A549 (cell line): ENCODE measurements at regions of chr3 and their contacts with region 1.

Region 1: DNA sequence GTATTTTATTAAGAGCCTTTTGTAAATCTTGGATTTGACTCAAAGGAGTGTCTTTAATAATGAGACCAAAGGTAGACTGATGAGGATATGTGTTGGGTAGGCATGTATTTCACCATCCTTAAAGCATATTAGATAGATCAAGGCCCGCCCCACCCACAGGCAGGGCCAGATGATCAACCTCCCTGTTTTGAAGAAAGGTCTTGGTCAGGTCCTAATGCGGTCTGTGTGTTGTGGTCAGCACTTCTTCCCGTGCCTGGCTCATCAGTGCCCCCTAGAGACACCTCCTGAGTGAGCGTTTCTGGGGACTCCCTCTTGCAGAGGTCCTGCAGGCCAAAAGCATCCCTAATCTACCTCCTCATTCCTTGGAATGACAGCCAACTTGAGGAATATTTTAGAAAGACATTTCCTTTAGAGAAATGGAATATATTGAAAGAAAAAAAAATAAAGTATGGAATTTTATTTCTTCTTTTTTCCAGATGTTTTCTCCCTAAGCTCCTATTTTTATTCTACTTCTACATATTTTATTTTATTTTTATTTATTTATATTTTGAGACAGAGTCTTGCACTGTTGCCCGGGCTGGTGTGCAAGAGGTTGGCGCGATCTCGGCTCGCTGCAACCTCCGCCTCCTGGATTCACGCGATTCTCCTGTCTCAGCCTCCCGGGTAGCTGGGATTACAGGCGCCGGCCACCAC is 6.0 kb downstream of the TM4SF4 start:
- DNase-seq: peak; percentile 85 to 95
- ATAC-seq: peak; percentile 97 to 98
- H3K4me3 ChIP-seq: no peak overlapping the region
- H3K27ac ChIP-seq: peak overlapping the region; percentile 82 to 83
- H3K4me1 ChIP-seq: peaks cover 46% of the 10 kb centered on the region
- CTCF ChIP-seq: peak; percentile 94
- EP300 ChIP-seq: no peak
- POLR2A ChIP-seq: no peak
- RAD21 ChIP-seq: peak; percentile 99 to 100

Region 2: DNA sequence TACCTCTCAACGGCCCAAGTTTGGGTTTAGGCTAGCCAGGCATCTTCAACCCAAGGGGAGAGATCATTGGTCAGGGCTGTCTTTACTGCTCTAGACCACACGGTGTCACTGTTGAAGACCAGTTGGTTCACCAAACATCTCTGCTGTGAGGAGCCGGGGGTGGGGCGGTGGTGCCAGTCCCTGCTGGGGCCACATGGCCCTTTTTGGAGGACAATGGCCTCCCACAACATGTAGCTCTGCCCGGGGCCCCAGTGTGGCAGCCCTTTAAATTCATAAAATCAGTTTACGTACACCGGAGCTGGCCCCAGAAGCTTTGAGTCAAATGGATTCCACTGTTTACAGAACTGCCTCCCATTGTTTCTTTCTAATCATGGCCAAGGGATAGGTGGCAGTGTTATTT is 127.9 kb before region 1 on chr3:
- CTCF ChIA-PET with region 1: interaction called, 44 read pairs
- POLR2A ChIA-PET with region 1: no interaction called
- DNase-seq: peak; percentile 82 to 86
- ATAC-seq: peak; percentile 83 to 95; a peak in 5 of 6 replicates
- H3K4me3 ChIP-seq: no peak overlapping the region
- H3K27ac ChIP-seq: peak overlapping the region; percentile 35 to 72; a peak in 5 of 6 replicates
- H3K4me1 ChIP-seq: peaks cover 6% of the 10 kb centered on the region; the same call in 1 of the 3 replicates
- CTCF ChIP-seq: peak; percentile 59
- EP300 ChIP-seq: no peak
- POLR2A ChIP-seq: no peak
- RAD21 ChIP-seq: peak; percentile 73 to 82

Region 3: DNA sequence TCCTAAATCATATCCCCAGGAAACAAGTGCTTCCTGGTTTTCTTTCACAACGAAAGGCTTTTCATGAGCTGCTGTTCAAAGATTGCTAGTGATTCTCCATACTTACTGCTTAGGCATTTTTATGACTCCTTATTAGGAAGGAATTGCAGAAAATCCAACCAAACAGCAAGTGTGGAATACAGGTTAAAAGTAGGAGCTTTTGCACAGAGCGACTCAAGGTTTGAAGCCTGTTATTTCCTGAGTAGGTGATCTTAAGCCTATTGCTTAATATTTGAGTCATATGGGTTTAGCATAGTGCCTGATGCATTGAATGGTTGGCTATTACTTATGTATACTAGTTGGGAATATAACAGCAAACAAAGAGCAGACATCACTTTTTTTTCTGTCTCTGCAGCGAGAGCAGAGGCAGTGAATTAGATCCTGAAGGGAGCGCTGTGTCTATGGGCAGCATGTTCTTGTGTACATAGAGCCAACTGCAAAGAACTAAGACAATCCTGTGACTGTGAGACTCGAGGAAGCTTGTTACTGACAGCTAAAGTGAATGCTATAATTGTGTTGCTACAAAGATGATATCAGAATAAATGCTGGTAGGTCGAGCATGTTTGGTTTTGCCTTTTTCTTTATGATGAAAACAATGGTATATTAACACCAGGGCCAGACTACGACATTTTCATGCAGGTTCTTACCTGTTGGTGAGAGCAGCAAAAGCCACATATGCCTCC is 109.3 kb before region 1 on chr3:
- CTCF ChIA-PET with region 1: interaction called, 12 read pairs
- POLR2A ChIA-PET with region 1: no interaction called
- DNase-seq: peak in 1 of 2 experiments; percentile 74
- ATAC-seq: peak in 1 of 2 experiments; percentile 0; a peak in 1 of 6 replicates
- H3K4me3 ChIP-seq: peak overlapping the region; percentile 58
- H3K27ac ChIP-seq: peak overlapping the region; percentile 79 to 88
- H3K4me1 ChIP-seq: peaks cover 86% of the 10 kb centered on the region
- CTCF ChIP-seq: peak; percentile 41; the same call in 2 of the 3 replicates
- EP300 ChIP-seq: no peak
- POLR2A ChIP-seq: no peak
- RAD21 ChIP-seq: peak; percentile 39 to 43; a peak in 4 of 5 replicates

Region 4: DNA sequence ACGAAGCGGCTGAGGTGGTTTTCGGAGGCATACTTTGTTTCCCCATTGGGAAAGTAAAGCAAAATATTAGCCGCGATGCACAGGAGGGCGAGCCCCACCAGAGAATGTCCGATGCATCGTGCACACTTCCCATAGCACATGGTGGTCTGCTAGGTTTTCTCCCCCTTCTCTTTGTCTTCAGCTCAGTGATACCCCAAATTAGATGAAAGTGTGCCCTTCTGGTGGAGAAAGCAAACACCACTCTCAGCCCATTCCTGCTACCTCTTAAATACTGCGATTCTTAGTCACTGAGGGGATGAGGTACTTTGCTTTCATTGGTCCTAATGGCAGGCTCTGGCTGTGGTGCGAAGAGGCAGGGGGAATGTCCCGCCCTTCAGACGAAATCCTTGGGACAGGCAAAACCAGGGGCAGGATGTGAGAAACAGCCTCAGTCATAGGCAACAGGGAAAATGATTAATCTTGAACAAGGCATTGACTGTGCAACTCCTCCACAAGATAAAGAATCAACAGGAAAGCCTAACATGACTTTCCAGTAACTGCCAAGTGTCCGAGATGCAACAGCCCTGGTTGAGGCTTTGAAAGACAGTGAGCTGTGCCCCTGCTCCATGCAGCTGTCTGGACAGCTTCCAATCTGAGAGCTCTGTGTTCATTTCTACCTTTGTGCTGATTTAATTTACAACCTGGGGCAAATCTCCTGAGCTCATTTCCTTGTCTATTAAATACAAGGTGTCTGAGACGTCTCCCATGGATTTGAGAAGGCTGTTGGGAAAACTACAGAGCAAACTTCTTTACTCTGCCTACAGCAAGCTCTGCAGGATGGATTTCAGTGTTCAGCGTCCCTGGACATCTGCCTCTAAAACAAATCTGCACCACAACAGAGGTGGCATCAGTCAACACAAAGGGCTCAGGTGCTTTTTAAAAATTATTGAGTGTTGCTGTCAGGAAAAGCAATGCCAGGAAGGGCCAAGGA is 102.8 kb before region 1 on chr3 and contains the start of gene TM4SF1:
- CTCF ChIA-PET with region 1: interaction called, 12 read pairs
- POLR2A ChIA-PET with region 1: interaction called, 3 read pairs
- DNase-seq: peak; percentile 87 to 98
- ATAC-seq: peak; percentile 85 to 92
- H3K4me3 ChIP-seq: peak within 1 kb of the TSS; percentile 58
- H3K27ac ChIP-seq: peak within 1 kb of the TSS; percentile 88 to 92
- H3K4me1 ChIP-seq: peaks cover 55% of the 10 kb centered on the region
- CTCF ChIP-seq: no peak
- EP300 ChIP-seq: 0 out of 5 replicates have a peak, but pooled peaks of 1 of the 2 experiments have one; percentile 26
- POLR2A ChIP-seq: peak; percentile 90
- RAD21 ChIP-seq: peak in 1 of 2 experiments; percentile 14; a peak in 4 of 5 replicates
- polyA plus RNA-seq, gene TM4SF1: 1,188 and 1,208 TPM in 2 replicates

Region 5: DNA sequence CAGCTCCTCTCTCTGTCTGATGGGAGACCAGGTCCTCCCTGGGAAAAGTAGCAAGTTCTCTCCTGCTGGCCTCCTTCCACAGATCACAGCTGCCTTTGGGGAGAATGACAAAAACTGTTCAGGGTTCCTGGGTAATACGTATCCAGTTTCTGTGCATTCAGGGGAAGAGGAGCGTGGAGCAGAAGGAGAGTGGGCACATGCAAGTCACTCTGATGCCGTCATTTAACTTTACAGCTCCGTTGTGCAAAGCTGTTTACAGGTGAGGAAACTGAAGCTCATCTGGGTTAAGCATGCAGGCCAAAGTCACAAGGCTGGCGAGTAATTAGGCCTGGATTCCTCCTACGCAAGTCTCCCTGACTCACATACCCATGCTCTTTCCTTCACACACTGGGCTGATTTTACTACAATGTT is 95.6 kb before region 1 on chr3:
- CTCF ChIA-PET with region 1: interaction called, 11 read pairs
- POLR2A ChIA-PET with region 1: interaction called, 4 read pairs
- DNase-seq: peak in 1 of 2 experiments; percentile 70
- ATAC-seq: no peak
- H3K4me3 ChIP-seq: no peak overlapping the region
- H3K27ac ChIP-seq: peak overlapping the region; percentile 93 to 94
- H3K4me1 ChIP-seq: peaks cover 77% of the 10 kb centered on the region
- CTCF ChIP-seq: no peak
- EP300 ChIP-seq: no peak
- POLR2A ChIP-seq: no peak
- RAD21 ChIP-seq: no peak

Region 6: DNA sequence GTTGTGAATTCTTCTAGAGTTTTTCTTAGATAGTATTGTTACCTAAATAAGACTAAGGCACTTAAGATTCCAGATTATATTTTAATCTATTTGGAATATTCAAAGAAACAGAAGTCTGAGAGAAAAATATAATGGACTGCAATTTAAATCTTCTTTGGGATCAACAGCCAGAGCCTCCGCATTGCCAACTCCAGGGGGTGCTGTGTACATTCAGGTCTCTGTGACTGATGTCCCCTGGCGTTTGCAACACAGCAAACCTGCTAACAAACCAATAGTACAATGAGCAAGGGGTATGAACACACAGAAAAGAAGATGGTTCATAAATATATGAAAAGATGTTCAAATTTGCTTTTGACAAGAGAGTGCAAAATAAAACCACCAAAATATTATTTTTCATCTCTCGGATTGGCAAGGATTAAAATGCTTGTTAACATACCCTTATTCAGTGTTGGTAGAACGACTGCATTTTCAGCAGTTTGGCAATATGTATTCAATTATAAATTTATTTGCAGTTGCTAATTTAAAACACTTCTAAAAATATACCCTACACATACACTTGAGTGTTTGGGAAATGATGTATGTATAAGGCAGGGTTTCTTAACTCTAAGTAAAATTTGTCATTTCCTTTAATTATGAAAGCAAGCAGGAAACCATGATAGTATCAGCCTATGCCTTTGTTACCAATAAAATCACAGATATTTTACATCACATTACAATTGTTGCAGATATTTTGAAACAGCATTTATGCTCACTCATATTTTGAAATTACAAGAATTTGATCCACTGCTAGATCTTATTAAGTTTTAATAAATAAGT is 86.9 kb before region 1 on chr3:
- CTCF ChIA-PET with region 1: interaction called, 21 read pairs
- POLR2A ChIA-PET with region 1: no interaction called
- DNase-seq: peak; percentile 71 to 89
- ATAC-seq: peak; percentile 76 to 81
- H3K4me3 ChIP-seq: no peak overlapping the region
- H3K27ac ChIP-seq: peak overlapping the region; percentile 20 to 55; a peak in 5 of 6 replicates
- H3K4me1 ChIP-seq: peaks cover 72% of the 10 kb centered on the region
- CTCF ChIP-seq: peak; percentile 97
- EP300 ChIP-seq: no peak
- POLR2A ChIP-seq: no peak
- RAD21 ChIP-seq: peak; percentile 97 to 98

Region 7: DNA sequence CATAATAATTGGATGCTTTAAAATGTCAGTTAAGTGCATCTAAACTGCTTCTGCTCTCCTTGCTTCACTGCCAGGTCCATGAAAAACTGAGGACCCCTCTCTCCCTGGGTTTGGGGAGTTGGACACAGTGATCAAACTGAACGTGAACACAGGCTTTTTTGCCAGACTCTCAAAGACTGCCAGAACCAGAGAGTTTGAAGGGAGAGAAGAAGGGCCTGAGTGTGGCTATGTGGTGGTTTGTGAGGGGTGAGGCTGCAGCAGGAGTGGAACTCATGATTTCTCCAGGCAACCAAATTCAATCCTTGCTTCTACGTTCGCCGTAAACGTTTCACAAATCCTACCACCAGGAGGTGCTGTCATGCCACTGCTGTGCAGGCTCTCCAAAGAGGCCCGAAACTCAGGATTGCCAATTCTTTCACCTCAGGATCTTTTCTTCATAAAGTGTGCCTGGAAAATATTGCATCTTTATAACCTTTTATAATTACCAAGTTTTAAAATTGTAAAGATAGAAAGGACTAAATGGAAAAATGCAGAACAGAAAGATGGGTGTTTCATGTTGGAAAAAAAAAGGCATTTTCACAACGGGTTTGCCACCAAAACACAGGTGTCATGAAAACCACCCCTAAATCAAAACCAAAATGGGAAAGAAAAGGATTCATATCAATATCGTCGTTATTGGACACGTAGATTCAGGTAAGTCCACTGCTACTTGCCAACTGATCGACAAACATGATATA is 13.7 kb after region 1 on chr3:
- CTCF ChIA-PET with region 1: interaction called, 52 read pairs
- POLR2A ChIA-PET with region 1: no interaction called
- DNase-seq: peak; percentile 72 to 76
- ATAC-seq: peak; percentile 82 to 90; a peak in 5 of 6 replicates
- H3K4me3 ChIP-seq: no peak overlapping the region
- H3K27ac ChIP-seq: peak overlapping the region in 1 of 2 experiments; percentile 44; a peak in 1 of 6 replicates
- H3K4me1 ChIP-seq: peaks cover 6% of the 10 kb centered on the region; the same call in 2 of the 3 replicates
- CTCF ChIP-seq: peak; percentile 89
- EP300 ChIP-seq: no peak
- POLR2A ChIP-seq: no peak
- RAD21 ChIP-seq: peak; percentile 87 to 95